ENCODE measurements at regions of chr22 and their contacts with region 1.

Region 1: GRCh38 chr22:23893943-23894709 is at the start of gene MIF:
- DNase-seq: peak; percentile 96
- H3K4me3 ChIP-seq: peak within 1 kb of the TSS; percentile 69 to 91 (median 77)
- H3K27ac ChIP-seq: peak within 1 kb of the TSS; percentile 45
- H3K4me1 ChIP-seq: peaks cover 13% of the 10 kb centered on the region
- H3K27me3 ChIP-seq: no peaks in the 10 kb centered on the region
- CTCF ChIP-seq: peak; percentile 89
- POLR2A ChIP-seq: peak; percentile 93
- total RNA-seq, gene MIF: 674 and 730 TPM in 2 replicates

Region 2: DNA sequence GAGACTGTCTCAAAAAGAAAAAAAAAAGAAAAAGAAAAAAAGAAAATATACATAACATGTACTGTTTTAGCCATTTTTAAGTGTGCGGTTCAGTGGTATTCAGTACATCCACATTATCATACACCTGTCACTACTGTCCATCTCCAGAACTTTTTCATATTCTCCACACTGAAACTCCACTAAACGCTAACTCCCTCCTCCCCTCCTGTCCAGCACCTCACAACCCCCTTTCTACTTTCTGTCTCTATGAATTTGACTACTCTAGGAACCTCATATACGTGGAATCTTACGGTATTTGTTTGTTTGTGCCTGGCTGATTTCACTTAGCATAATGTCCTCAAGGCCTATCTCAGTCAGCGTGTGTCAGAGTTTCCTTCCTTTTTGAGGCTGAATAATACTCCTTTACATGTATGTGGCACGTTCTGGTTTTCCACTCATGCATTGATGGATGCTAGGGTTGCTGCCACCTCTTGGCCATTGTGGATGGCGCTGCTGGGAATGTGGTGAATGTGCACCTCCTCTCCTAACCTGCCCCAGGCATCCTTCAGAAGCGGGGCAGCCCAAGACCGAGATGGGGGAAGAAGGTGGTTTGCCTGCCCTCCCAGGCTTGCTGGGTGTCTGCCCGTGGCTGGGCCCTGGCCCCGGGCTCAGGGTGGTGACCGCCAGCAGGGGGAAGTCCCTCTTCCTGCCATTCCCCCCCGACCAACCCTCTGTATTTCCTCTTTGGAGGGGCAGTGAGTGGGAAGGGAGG is 653.3 kb before region 1 on chr22:
- CTCF ChIA-PET with region 1: no interaction called
- POLR2A ChIA-PET with region 1: no interaction called
- dilution Hi-C with region 1: no loop called
- intact Hi-C with region 1: no loop called
- DNase-seq: peak; percentile 93
- H3K4me3 ChIP-seq: no peak overlapping the region
- H3K27ac ChIP-seq: peak overlapping the region; percentile 70
- H3K4me1 ChIP-seq: peaks cover 28% of the 10 kb centered on the region
- H3K27me3 ChIP-seq: no peaks in the 10 kb centered on the region
- CTCF ChIP-seq: peak; percentile 75 to 77
- POLR2A ChIP-seq: no peak

Region 3: DNA sequence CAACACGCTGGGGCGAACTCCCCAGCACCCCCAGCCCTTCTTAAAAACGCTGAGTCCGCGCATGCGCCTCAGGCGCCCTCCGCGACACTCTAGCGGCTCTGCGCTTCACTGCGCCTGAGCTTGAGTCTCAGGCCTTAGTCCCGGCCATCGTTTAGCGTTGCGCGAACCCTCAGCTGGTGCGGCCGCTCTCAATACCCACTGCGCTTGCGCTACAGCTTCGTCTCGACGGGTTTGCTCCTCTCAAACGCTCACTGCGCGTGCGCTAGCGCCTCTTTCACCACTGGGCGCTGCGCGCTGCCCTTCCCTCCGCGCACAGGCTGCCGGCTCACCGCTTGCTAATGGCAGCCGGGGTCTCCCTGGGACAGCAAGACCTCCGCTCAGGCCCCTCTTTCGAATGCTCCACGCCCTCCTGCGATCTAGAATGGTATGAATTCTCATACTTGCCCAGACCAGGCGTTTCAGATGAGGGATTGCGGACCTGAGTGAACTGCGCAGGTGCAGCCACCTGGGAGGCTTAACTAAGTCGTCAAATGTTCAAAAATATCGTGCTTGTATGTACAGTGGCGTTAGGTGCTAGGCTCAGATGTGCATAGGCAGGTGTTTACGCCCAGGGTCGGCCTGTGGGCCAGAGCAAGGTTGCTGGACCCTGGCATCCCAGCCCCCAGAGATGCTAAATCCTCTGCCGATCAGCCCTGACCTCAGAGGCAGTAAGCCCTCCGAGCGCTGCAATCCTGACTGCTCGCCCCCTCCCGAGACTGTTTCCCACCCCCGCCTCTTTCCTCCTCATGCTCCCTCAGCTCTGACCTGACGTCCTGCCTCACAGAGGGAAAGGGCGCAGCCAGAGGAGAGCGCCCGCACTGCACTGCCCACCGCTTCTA is 36.3 kb before region 1 on chr22 and contains the start of gene SLC2A11:
- CTCF ChIA-PET with region 1: interaction called, 39 read pairs
- POLR2A ChIA-PET with region 1: interaction called, 5 read pairs
- dilution Hi-C with region 1: no loop called
- intact Hi-C with region 1: loop called (anchors 1 kb)
- DNase-seq: peak; percentile 98
- H3K4me3 ChIP-seq: peak within 1 kb of the TSS; percentile 64 to 83 (median 65)
- H3K27ac ChIP-seq: no peak within 1 kb of the TSS
- H3K4me1 ChIP-seq: peaks cover 15% of the 10 kb centered on the region
- H3K27me3 ChIP-seq: no peaks in the 10 kb centered on the region
- CTCF ChIP-seq: peak in 1 of 2 donors; percentile 32
- POLR2A ChIP-seq: peak; percentile 76
- total RNA-seq, gene SLC2A11: 3.6 and 4.6 TPM in 2 replicates

Region 4: DNA sequence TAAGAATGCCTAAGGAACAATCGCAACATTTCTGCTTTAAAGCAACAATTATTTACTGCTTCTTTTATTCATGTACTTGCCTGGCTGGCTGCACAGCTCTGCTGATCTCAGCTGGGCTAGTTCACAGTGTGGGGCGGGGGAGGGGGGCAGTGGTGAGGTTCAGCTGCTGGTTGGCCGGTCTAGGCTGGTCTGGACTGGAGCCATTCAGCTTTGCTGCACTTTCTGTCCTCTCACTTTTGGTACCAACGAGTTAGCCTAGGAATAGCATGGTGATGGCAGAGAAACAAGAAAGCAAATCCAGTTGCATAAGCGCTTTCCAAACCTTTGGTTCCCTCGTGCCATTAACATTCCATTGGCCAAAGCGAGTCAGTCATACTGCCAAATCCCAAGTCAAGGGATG is 15.9 kb before region 1 on chr22:
- CTCF ChIA-PET with region 1: interaction called, 12 read pairs
- POLR2A ChIA-PET with region 1: no interaction called
- dilution Hi-C with region 1: no loop called
- intact Hi-C with region 1: no loop called
- DNase-seq: no peak
- H3K4me3 ChIP-seq: no peak overlapping the region
- H3K27ac ChIP-seq: no peak overlapping the region
- H3K4me1 ChIP-seq: no peaks in the 10 kb centered on the region
- H3K27me3 ChIP-seq: no peaks in the 10 kb centered on the region
- CTCF ChIP-seq: no peak
- POLR2A ChIP-seq: no peak

Region 5: GRCh38 chr22:23913661-23914353 is 19.7 kb after region 1 on chr22:
- CTCF ChIA-PET with region 1: interaction called, 14 read pairs
- POLR2A ChIA-PET with region 1: interaction called, 10 read pairs
- dilution Hi-C with region 1: no loop called
- intact Hi-C with region 1: loop called (anchors 1 kb)
- DNase-seq: peak; percentile 99
- H3K4me3 ChIP-seq: peak overlapping the region; percentile 45 to 87 (median 72)
- H3K27ac ChIP-seq: peak overlapping the region; percentile 84
- H3K4me1 ChIP-seq: peaks cover 12% of the 10 kb centered on the region
- H3K27me3 ChIP-seq: peaks cover 0 to 4% of the 10 kb centered on the region in 2 experiments
- CTCF ChIP-seq: no peak
- POLR2A ChIP-seq: peak; percentile 86